Activated CD4-positive, alpha-beta memory T cell treated with anti-CD3 and anti-CD28 coated beads, Interleukin-2, amount 10 ng/mL, durations not matched to agents 7 days and 5 days (primary cell): ENCODE measurements at regions of chr7 and their contacts with region 1.

Region 1: DNA sequence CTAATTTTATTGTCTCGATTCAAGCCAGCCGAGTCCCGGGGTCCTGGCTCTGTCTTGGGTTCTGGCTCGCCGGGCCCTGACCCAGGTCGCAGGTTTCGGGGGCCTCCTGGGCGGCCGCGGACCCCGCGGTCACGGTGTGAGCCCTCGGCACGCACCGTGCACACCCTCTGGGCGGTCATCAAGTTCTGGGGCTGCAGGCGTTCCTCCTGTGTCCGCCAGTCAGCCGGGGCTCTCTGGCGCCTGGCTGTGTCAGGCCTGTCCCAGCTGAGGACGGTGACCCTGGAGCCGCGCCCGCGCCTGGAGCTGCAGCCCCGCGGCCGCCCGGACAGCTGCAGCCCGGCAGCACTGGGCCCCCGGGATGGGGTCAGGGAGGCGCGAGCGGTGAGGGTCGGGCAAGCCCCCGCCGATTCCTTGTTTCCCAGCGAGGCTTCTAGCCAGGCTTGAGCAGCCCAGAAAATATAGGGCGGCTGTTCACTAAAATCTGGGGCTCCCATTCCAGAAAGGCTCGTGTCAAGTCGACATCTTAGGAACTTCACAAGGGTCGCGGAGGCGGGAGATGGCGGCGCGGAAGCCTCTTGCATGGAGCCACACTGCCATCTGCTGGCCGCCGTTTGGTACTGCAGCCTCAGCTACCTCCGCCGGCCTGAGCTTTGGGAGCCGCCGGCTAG is 4.2 kb upstream of the HOXA7 start:
- DNase-seq: peak; percentile 79
- H3K4me3 Mint-ChIP-seq: peak overlapping the region; percentile 53
- H3K27ac Mint-ChIP-seq: no peak overlapping the region
- H3K4me1 Mint-ChIP-seq: peaks cover 18% of the 10 kb centered on the region
- H3K27me3 Mint-ChIP-seq: peaks cover 84% of the 10 kb centered on the region

Region 2: DNA sequence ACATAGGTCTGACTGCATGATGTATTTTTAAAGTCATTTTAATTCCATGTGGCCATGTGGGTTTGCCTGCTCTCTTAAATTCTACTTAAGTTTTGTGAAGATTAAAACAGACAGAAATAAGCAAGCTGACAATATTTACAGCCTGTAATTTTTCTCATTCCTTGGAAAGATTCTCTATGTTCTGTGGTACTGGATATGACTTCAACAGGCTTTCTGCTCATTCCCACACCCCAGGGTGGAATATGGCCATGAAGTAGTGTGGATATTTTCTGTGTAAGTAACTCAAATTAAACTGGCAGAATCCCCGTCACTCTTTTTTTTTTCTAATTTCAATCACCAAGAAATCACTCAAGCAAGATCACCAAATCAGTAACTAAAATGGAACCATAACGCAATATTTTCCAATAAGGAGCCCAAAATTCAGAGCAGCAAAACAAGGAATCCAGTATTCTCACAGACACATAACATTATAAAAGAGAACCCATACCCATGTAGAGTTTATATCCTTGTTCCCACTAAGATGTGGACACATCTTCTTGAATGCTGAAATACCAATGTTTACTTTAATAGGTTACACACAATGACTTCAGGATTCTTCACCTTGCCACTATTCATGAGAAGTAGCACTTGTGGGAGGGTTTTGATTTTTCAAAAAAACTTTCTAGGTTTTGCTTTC is 22.9 kb before region 1 on chr7:
- CTCF ChIA-PET with region 1: no interaction called
- POLR2A ChIA-PET with region 1: no interaction called
- DNase-seq: no peak
- H3K4me3 Mint-ChIP-seq: no peak overlapping the region
- H3K27ac Mint-ChIP-seq: no peak overlapping the region
- H3K4me1 Mint-ChIP-seq: peaks cover 20% of the 10 kb centered on the region
- H3K27me3 Mint-ChIP-seq: peaks cover 50% of the 10 kb centered on the region

Region 3: DNA sequence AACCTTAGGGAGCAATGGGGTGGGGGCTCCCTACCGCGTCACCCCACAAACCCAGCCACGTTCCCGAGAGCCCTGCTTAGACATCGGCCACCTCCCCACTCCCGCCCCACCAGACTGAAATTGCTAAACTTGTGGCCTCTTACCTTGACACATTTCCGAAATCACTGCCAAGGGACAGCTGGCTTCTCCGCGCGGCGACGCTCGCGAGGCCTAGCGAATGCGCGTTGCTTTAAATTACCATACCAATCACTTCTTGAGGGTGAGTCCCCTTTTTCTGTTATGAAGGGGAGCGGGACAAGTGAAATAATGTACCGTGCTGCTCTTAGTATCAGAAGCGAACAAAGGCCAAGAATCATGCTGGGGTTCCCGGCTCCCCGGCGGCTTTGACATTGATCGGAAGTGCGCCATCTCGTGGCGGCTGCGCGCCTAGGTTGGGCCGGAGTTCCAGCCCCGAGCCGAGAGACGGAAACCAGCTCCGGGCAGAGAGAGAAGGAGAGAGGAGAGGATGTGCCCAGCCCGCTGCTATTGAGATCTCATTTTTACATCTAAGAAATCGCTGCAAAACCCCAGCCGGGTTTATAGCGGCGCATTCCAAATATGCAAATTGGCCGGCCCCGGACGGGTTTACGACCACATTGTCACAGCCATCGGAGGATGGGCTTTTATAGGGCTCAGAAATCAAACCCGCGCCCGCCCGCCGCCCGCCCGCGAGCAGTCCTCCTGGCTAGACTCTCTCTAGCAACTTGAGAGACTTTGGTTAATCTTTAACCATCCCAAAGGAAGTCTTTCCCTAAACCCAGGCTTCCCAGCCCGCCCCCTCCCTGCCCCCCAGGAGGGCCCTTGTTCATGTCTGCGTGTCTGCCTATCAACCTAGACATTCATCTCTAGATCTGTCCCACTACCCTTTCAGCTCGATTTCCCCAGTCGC is 19.1 kb after region 1 on chr7:
- CTCF ChIA-PET with region 1: interaction called, 10 read pairs
- POLR2A ChIA-PET with region 1: no interaction called
- DNase-seq: peak; percentile 56
- H3K4me3 Mint-ChIP-seq: no peak overlapping the region
- H3K27ac Mint-ChIP-seq: no peak overlapping the region
- H3K4me1 Mint-ChIP-seq: peaks cover 7% of the 10 kb centered on the region
- H3K27me3 Mint-ChIP-seq: peaks cover 69% of the 10 kb centered on the region